ENCODE measurements at regions of chr4 and their contacts with region 1.

Region 1: GRCh38 chr4:155403886-155404285 is 27.1 kb upstream of the MAP9 start:
- DNase-seq: peak; percentile 53
- H3K4me3 ChIP-seq: no peak overlapping the region
- H3K27ac ChIP-seq: no peak overlapping the region
- H3K4me1 ChIP-seq: no peaks in the 10 kb centered on the region
- H3K27me3 ChIP-seq: no peaks in the 10 kb centered on the region
- CTCF ChIP-seq: peak; percentile 61
- EP300 ChIP-seq: no peak
- RAD21 ChIP-seq: peak; percentile 87

Region 2: DNA sequence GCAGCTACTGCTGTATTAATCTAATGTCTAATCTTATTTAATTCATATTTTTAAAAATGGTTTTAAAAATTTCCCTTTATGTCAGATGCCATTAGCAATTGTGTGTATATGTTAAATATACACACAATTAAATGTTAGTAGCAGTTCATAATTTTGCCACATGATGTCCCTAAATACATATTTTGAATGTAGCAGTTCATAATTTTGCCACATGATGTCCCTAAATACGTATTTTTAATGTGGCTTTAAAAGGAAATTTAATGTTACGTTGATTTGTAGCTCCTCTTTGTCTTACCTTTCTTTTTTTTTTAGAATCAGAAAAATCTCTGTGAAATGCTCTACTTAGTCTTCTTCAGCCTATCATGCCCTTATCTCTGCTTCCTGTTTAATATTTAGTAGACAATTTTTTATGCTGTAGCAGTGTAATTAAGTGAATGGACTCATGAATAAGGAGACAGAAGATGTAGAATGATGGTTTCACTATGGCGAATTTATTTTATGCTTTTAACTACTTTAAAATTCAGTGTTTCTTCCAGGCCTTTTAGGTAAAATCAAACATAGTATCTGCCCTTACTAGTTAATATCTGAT is 596.8 kb before region 1 on chr4:
- CTCF ChIA-PET with region 1: interaction called, 10 read pairs
- POLR2A ChIA-PET with region 1: no interaction called
- DNase-seq: peak; percentile 24
- H3K4me3 ChIP-seq: peak overlapping the region in 1 of 2 experiments; percentile 1; a peak in 1 of 4 replicates
- H3K27ac ChIP-seq: no peak overlapping the region
- H3K4me1 ChIP-seq: no peaks in the 10 kb centered on the region; a peak in 1 of 4 replicates
- H3K27me3 ChIP-seq: no peaks in the 10 kb centered on the region
- CTCF ChIP-seq: peak; percentile 86
- EP300 ChIP-seq: no peak
- RAD21 ChIP-seq: peak; percentile 84

Region 3: GRCh38 chr4:155304375-155304774 is 99.5 kb before region 1 on chr4:
- CTCF ChIA-PET with region 1: no interaction called
- POLR2A ChIA-PET with region 1: no interaction called
- DNase-seq: no peak
- H3K4me3 ChIP-seq: no peak overlapping the region
- H3K27ac ChIP-seq: no peak overlapping the region
- H3K4me1 ChIP-seq: no peaks in the 10 kb centered on the region
- H3K27me3 ChIP-seq: no peaks in the 10 kb centered on the region
- CTCF ChIP-seq: no peak
- EP300 ChIP-seq: no peak
- RAD21 ChIP-seq: no peak

Region 4: DNA sequence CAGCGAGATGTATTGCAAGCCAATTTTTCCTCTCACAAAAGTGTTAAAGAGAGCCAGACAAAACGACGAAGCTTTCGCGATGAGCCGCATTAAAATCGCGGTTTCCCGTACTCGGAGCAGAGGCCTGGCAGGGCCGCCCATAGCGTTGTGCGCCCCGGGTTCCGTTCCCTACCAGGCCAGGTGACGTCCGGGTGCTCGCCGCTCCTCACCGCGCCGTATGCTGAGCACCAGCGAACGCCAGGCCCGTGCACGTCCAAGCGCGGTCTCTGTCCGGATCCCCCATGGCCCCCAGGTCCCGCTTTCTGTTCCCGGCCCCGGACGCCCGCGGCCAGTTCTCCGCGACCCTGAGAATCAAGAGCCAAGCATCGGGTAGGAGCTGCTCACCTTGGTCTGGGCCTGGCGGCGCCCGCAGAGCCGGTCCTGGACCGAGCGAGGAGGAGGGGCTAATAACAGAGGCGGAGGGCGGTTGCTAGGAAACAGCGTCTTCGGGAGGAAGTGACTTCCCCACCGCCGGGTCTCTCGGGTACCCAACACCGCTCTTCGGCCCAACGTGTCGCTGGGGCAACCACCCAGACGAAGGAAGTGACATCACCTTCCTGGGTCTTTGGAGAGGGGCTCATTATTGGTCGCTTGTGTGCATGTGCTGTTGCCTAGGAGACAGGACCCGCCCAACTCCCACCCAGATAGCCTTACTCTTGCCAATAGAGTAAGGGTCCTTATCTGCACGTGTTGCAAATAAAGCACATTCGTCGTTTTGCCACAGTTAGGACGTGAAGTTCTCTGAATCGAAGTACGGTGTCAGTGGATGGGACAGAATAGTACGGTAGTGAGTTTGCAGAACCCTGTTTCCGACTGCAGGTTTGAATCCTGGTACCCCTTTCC is 27.3 kb before region 1 on chr4 and contains the start of gene MAP9:
- CTCF ChIA-PET with region 1: interaction called, 10 read pairs
- POLR2A ChIA-PET with region 1: no interaction called
- DNase-seq: peak; percentile 93
- H3K4me3 ChIP-seq: peak within 1 kb of the TSS; percentile 71 to 90
- H3K27ac ChIP-seq: peak within 1 kb of the TSS; percentile 59 to 86
- H3K4me1 ChIP-seq: peaks cover 4 to 6% of the 10 kb centered on the region in 2 experiments; a peak in 3 of 4 replicates
- H3K27me3 ChIP-seq: no peaks in the 10 kb centered on the region
- CTCF ChIP-seq: no peak
- EP300 ChIP-seq: no peak
- RAD21 ChIP-seq: no peak
- polyA plus RNA-seq, gene MAP9: 4.1 and 6.4 TPM in 2 replicates

Region 5: DNA sequence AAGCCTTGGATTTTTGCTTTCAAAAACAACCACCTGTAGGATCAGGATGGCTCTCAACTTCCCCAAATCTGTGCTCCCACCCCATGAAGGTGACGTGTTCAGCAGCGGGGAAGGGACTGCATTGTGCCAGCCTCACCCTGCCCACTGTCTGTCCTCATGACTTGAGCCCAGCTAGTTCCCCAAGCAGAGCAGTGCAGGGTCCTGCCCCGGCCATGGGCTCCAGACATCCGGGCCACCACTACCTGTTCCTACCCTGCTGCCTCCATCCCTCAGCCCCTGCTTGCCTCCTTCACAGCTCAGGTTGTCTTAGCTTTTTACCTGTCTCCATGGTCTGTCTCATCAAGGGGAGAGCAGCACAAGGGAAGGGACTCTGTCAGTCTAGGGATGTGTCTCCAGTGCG is 15.7 kb before region 1 on chr4:
- CTCF ChIA-PET with region 1: interaction called, 13 read pairs
- POLR2A ChIA-PET with region 1: no interaction called
- DNase-seq: no peak
- H3K4me3 ChIP-seq: no peak overlapping the region
- H3K27ac ChIP-seq: no peak overlapping the region
- H3K4me1 ChIP-seq: no peaks in the 10 kb centered on the region
- H3K27me3 ChIP-seq: no peaks in the 10 kb centered on the region
- CTCF ChIP-seq: no peak
- EP300 ChIP-seq: no peak
- RAD21 ChIP-seq: no peak

Region 6: DNA sequence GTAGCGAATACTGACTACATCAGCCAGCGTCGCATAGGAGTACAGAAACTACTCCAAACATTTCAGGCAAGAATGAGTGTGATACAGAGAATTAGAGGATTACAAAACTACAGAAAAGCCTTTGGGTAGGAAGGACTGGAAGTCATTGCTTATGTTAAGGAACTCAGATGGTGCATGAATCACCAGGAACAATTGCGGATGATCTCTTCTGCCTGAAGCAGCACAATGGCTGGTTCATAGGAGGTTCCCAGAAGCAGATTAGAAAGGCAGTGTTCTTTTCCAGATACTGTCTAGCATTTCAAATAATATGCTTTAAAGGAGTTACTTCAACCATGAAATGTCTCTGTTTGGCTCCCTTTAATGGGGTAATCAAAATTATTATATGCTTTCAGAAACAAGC is 15.4 kb after region 1 on chr4:
- CTCF ChIA-PET with region 1: interaction called, 15 read pairs
- POLR2A ChIA-PET with region 1: no interaction called
- DNase-seq: no peak
- H3K4me3 ChIP-seq: no peak overlapping the region
- H3K27ac ChIP-seq: no peak overlapping the region
- H3K4me1 ChIP-seq: no peaks in the 10 kb centered on the region
- H3K27me3 ChIP-seq: no peaks in the 10 kb centered on the region
- CTCF ChIP-seq: no peak
- EP300 ChIP-seq: no peak
- RAD21 ChIP-seq: no peak

Region 7: DNA sequence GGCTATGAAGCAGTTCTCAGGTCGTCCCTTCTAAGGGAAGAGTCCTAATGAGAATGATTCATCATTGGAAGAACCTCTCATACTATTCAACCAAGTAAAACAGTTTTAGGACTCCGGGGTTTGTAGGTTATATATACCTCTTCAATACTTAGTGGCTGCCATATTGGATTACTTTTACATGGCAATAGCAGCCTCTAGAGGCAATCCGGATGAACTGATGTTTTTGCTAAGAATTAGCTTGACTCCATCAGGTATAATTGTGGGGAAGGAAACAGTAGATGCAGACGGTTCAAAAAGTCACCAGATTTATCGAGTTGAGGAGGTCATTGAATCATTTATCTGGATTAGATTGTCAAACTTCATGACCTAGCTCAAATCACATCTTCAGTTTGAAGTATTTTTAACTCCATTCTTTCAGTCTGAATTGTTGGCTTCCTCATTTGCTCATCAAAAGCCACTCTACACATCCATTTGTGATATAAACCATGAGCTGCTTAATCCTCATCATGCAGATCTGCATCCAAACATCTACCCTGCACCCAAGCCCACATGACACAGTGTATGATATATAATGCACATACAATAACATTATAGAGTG is 383.3 kb after region 1 on chr4:
- CTCF ChIA-PET with region 1: interaction called, 27 read pairs
- POLR2A ChIA-PET with region 1: no interaction called
- DNase-seq: peak; percentile 65
- H3K4me3 ChIP-seq: no peak overlapping the region; a peak in 1 of 4 replicates
- H3K27ac ChIP-seq: no peak overlapping the region
- H3K4me1 ChIP-seq: no peaks in the 10 kb centered on the region; a peak in 1 of 4 replicates
- H3K27me3 ChIP-seq: no peaks in the 10 kb centered on the region
- CTCF ChIP-seq: peak; percentile 87
- EP300 ChIP-seq: no peak
- RAD21 ChIP-seq: peak; percentile 96

Region 8: DNA sequence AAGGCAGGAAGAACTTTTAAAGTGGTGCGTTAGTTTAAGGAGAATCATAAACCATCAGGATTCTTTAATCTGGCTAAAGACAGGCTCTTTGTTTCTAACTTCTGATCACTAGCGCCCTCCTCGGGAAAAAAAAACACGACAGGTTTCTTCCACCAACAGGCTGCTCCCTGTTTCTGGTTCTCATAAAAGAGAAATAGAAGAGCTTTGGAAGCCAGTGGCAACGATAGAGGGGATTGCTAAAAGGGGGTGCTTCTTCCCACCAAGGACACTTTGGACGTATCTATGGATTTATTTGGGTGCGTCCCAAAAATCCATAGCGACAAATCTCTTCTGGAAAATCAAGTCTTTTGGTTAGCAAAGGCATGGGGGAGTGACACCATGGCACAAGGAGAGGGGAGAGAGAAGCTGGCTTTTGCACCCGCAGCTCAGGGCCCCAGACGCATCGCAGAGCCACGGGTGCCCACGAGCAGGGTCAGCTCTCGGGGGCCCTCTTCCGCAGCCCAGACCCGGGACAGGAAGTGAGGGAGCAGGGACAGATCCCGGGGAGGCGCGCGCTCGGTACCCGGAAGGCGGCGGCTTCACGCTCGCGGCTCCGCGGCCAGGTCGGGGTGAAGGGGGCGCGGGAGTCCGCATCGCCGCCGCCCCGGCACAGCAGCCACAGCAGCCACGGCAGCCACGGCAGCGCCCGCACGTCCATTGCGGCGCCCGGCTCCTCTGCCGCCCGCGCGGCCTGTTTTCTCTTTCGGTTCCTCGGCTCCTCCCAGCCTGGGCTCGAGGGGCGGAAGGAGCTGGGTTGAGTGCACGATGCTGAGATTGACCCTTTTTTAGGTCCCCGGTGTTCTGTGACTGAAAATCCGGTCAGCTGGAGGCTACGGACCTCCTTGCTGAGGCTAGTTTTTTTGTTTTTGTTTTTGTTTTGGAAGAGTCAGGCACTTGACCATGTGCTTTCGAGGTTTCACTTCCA is 549.5 kb after region 1 on chr4 and contains the start of gene CTSO:
- CTCF ChIA-PET with region 1: interaction called, 29 read pairs
- POLR2A ChIA-PET with region 1: interaction called, 5 read pairs
- DNase-seq: peak; percentile 89
- H3K4me3 ChIP-seq: peak within 1 kb of the TSS; percentile 65 to 99
- H3K27ac ChIP-seq: peak within 1 kb of the TSS; percentile 96 to 98
- H3K4me1 ChIP-seq: peaks cover 0 to 5% of the 10 kb centered on the region in 2 experiments; a peak in 2 of 4 replicates
- H3K27me3 ChIP-seq: no peaks in the 10 kb centered on the region
- CTCF ChIP-seq: peak; percentile 72
- EP300 ChIP-seq: peak in 1 of 2 experiments; percentile 21; a peak in 1 of 4 replicates
- RAD21 ChIP-seq: peak; percentile 67
- polyA plus RNA-seq, gene CTSO: 3.3 and 4.4 TPM in 2 replicates